Uterus (tissue), 4 donors: ENCODE measurements at regions of chrX and their contacts with region 1.

Region 1: DNA sequence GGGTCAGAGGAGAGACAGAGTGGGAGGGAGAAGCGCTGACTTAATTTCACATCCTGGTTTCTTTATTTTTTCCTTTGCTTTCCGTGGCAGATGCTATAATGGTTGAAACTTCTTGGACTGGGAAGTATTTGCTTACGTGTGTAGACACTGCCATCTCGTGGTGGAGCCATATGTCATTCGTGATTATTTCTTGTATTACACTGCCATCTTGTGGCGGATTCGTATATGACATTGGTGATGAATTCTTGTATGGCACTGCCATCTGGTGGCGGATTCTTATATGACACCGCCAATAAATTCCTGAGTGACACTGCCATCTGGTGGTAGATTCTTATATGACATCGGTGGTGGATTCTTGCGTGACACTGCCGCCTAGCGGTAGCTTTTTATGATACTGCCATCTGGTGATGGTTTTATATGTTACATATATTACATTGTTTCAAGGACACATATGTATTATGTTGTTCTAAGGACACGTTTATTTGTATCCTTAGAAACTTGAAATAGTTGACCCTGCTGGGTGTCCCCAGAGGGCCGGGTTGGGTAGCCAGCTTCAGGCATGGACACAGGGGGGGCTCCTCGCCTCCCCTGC is 37.3 kb upstream of the CLCN4 start:
- DNase-seq: peak; percentile 56 to 84
- H3K4me3 ChIP-seq: no peak overlapping the region
- H3K27ac ChIP-seq: no peak overlapping the region
- H3K4me1 ChIP-seq: no peaks in the 10 kb centered on the region
- H3K27me3 ChIP-seq: no peaks in the 10 kb centered on the region
- CTCF ChIP-seq: peak; percentile 100
- POLR2A ChIP-seq: peak in 1 of 2 donors; percentile 46

Region 2: DNA sequence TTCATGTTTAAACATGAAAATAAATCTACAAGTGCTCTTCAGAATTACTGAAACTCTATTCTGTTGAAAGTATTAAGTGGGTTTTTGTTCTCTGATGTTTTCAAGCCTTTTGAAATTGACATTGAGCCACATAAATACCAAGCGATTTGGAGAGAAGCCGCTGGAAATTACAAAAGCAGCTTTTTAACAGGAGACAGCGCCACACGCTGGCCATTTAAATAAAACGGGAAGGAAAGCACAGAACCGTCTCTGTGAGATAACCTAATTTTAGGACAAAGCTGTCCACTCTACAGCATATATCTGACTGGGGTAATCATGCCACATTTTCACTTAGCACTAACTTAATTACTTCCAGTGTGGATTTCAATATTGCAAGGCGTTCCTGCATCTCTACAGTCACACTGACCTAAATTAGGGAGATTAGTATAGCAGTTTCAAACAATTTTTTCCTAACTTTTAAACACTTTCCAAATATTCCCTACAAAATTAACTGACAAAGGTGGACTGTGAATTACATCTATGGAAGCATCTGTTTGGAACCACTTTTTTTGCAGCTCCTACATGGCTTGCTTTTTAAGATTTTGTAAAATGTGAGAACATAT is 1380.8 kb before region 1 on chrX:
- intact Hi-C with region 1: loop called (anchors 10 kb)
- DNase-seq: no peak
- H3K4me3 ChIP-seq: no peak overlapping the region
- H3K27ac ChIP-seq: no peak overlapping the region
- H3K4me1 ChIP-seq: no peaks in the 10 kb centered on the region
- H3K27me3 ChIP-seq: no peaks in the 10 kb centered on the region
- CTCF ChIP-seq: peak; percentile 30 to 46 (median 38)
- POLR2A ChIP-seq: no peak

Region 3: GRCh38 chrX:9995855-9996339 is 123.6 kb before region 1 on chrX:
- intact Hi-C with region 1: loop called (anchors 5 kb)
- DNase-seq: peak; percentile 77 to 83
- H3K4me3 ChIP-seq: no peak overlapping the region
- H3K27ac ChIP-seq: no peak overlapping the region
- H3K4me1 ChIP-seq: no peaks in the 10 kb centered on the region
- H3K27me3 ChIP-seq: no peaks in the 10 kb centered on the region
- CTCF ChIP-seq: peak; percentile 87 to 94 (median 92)
- POLR2A ChIP-seq: no peak

Region 4: GRCh38 chrX:10062352-10062751 is 57.1 kb before region 1 on chrX:
- intact Hi-C with region 1: no loop called
- DNase-seq: no peak
- H3K4me3 ChIP-seq: no peak overlapping the region
- H3K27ac ChIP-seq: no peak overlapping the region
- H3K4me1 ChIP-seq: no peaks in the 10 kb centered on the region
- H3K27me3 ChIP-seq: no peaks in the 10 kb centered on the region
- CTCF ChIP-seq: no peak
- POLR2A ChIP-seq: no peak